ENCODE measurements at regions of chr12 and their contacts with region 1.

Region 1: GRCh38 chr12:62435303-62436163 is 31.1 kb upstream of the MON2 start:
- ATAC-seq: peak; percentile 64 to 95 (median 84)
- H3K4me3 ChIP-seq: peak overlapping the region in 3 of 5 donors; percentile 15 to 27 (median 22)
- H3K27ac ChIP-seq: no peak overlapping the region
- H3K4me1 ChIP-seq: no peaks in the 10 kb centered on the region

Region 2: GRCh38 chr12:62028536-62028935 is 407.0 kb before region 1 on chr12:
- in situ Hi-C with region 1: no loop called
- ATAC-seq: no peak
- H3K4me3 ChIP-seq: no peak overlapping the region
- H3K27ac ChIP-seq: no peak overlapping the region
- H3K4me1 ChIP-seq: peaks cover 3 to 5% of the 10 kb centered on the region in 2 donors

Region 3: DNA sequence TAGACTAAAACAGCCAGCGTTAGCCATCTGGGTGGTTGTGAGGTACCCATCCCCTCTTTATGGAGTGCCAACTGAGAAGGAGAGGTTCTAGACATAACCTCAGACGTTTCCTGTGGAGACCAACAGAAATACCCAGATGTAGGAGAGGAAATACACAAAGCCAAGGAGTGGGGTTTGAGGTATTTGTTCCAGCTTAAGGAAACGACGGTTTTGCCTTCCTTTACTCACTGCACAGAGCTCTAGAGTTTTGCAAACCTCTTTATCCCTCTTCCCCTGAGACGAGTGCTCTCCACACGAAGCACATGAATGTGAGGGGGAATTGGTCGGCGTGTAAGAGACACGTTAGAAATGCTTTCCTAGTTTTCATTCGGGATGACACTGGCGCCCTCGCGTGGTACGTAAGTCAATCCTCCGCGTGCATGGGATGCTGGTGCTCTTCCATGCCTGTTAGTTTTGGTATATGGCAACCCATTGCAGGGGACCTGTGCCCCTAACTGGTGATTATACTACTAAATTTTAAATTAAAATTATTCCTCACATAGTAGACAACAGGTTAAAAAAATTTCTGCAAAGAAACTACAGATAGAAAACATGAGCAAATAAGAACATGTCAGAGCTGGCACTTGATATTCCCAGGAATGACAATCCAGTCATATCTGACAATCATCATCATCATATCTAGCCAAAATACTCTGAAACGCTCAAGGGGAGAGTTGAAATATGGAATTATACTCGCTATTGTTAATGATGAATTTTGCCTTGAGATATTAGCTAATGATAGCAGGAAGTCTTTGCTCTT is 377.7 kb after region 1 on chr12:
- in situ Hi-C with region 1: loop called in 5 of 9 experiments (anchors 25 kb)
- ATAC-seq: peak; percentile 30 to 93 (median 72)
- H3K4me3 ChIP-seq: no peak overlapping the region
- H3K27ac ChIP-seq: no peak overlapping the region
- H3K4me1 ChIP-seq: no peaks in the 10 kb centered on the region

Measured in motor neuron (in vitro differentiated cells).